Endothelial cell of umbilical vein (primary cell): ENCODE measurements at regions of chr1 and their contacts with region 1.

Region 1: DNA sequence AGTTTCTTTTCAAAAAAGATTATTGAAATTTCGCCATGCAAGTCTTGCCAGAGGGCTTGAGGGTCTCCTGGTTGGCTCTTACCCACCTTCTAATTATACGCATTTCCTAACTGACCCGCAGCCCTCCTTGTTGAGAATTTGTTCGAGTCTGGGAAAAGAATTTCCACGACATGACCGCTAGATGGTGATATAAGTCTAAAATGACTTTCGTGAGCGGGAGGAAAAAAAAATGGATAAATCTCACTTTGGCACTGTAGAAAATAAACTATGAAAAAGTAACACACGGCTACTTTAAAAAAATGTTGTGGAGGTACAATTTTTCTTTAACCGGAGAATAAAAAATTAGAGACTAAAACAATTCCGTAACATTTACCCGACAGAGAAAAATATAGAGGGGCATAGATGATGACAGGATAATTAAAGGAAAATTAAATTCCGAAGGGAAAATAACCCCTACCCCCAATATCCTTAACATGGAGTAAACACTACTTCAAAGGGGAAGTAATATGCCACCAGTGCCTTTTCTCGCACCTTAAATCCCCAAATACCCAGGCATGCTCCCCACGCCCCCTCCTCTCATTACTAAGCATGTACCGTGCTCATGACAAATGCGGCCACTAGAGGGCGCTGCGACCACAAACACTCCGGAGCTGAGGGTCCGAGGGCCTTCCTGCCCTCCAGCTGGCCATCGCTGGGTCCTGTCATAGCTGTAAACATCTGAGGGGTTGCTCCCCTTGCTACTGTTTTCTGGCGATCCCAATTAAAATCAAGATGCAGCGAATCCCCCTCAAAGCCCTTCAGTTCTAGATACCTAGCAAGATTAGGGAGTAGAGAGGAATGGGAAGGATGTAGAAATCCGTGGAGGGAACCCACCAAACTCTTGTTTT is 266.9 kb downstream of the ASTN1 start:
- DNase-seq: peak; percentile 49
- H3K4me3 ChIP-seq: peak overlapping the region in 1 of 3 experiments; percentile 37
- H3K27ac ChIP-seq: no peak overlapping the region
- H3K4me1 ChIP-seq: peaks cover 4% of the 10 kb centered on the region
- H3K27me3 ChIP-seq: no peaks in the 10 kb centered on the region
- CTCF ChIP-seq: peak; percentile 79 to 89
- POLR2A ChIP-seq: no peak

Region 2: DNA sequence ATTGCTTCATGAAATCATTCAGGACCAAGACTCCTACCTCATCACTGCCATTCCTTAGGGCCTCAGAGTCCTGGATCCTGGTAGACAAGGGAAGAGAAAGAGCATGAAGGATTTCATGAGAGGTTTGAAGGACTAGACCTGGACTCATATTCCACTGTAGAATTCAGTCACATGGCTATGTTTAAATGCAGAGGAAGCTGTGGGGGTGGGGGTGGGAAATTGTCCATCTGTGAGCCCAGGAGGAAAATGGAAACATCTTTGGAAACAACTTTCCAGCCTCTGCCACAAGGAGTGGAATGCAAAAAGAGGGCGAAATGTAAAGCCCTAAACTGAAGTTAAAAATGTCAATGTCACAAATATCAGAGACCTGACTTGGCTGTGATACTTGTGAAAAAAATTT is 346.2 kb after region 1 on chr1:
- CTCF ChIA-PET with region 1: no interaction called
- POLR2A ChIA-PET with region 1: no interaction called
- dilution Hi-C with region 1: no loop called
- intact Hi-C with region 1: no loop called
- DNase-seq: no peak
- H3K4me3 ChIP-seq: no peak overlapping the region
- H3K27ac ChIP-seq: no peak overlapping the region
- H3K4me1 ChIP-seq: no peaks in the 10 kb centered on the region
- H3K27me3 ChIP-seq: no peaks in the 10 kb centered on the region
- CTCF ChIP-seq: no peak
- POLR2A ChIP-seq: no peak

Region 3: DNA sequence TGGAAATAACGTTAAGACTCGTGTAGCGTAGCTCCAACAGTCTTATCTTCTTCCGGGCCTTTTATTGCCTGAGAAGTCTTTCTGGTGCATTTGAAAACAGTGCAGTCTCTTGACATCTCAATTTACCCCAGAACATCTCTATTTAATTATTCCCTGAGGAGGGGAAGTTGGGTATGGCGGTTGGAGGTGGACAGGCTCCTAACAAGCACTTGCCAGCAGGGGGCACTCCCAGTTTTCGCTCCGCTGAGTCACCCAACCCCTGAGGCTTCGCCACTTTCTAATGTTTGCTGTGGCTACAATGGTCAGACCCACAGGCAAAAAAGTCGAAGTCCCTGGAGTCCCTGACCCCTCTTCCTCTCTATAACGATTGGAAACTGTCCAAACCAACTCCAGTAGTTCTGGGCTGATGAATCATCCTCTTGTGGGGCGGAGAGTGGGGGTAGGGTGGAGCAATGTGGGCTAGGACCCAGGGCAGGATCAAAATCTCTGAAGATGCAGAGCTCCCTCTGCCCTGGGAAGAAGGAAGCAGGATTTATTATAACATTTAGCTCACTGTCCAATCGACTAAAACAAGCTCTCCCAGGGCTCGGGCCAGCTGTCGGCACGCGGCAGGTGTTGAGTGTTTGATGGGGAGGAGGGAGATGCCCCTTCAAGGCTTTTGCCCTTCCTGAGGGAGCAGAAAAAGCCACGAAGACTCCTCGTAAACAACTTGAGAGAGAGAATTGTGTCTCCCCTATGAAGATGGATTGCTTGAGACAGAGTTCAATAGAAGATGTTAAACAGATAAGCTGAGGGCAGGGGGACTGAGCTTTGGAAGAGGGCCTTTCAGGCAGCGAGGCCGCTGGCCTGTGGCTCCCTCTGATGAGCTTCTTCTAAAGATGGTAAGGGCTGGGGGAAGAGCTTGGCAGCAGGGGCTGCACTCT is 358.8 kb after region 1 on chr1:
- CTCF ChIA-PET with region 1: no interaction called
- POLR2A ChIA-PET with region 1: no interaction called
- dilution Hi-C with region 1: no loop called
- intact Hi-C with region 1: loop called (anchors 5 kb)
- DNase-seq: peak; percentile 53
- H3K4me3 ChIP-seq: no peak overlapping the region
- H3K27ac ChIP-seq: no peak overlapping the region
- H3K4me1 ChIP-seq: peaks cover 8% of the 10 kb centered on the region
- H3K27me3 ChIP-seq: no peaks in the 10 kb centered on the region
- CTCF ChIP-seq: peak; percentile 42 to 45
- POLR2A ChIP-seq: no peak

Region 4: DNA sequence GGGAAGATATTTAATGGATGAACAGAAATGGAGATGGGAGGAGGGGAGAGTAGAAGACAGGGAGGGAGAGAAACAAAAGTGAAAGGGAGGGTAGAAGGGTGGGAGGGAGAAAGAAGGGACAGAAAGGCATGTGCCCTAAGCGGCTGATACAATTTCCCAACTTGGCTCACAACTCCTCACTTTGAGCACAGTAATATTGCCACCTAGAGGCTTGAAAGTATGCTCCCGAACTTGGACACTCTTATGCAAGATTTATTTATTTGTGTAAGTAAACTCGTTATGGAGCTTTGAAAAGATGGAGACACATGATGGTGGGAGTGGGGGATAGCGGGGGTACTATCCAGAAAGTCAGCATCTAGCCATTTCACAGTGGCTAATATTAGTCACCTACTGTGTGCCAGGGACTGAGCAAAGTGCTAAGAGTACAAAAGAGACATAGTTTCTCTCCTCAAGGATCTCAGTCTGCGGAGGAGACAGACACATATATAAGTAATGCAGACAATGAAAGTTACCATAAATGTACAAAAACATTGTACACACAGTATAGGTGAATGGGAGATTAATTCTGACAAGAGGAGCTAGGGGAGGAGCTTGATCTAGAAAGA is 882.6 kb after region 1 on chr1:
- CTCF ChIA-PET with region 1: interaction called, 19 read pairs
- POLR2A ChIA-PET with region 1: no interaction called
- dilution Hi-C with region 1: no loop called
- intact Hi-C with region 1: no loop called
- DNase-seq: peak; percentile 45
- H3K4me3 ChIP-seq: no peak overlapping the region
- H3K27ac ChIP-seq: no peak overlapping the region
- H3K4me1 ChIP-seq: peaks cover 4% of the 10 kb centered on the region
- H3K27me3 ChIP-seq: no peaks in the 10 kb centered on the region
- CTCF ChIP-seq: peak in 1 of 2 donors; percentile 19
- POLR2A ChIP-seq: no peak

Region 5: DNA sequence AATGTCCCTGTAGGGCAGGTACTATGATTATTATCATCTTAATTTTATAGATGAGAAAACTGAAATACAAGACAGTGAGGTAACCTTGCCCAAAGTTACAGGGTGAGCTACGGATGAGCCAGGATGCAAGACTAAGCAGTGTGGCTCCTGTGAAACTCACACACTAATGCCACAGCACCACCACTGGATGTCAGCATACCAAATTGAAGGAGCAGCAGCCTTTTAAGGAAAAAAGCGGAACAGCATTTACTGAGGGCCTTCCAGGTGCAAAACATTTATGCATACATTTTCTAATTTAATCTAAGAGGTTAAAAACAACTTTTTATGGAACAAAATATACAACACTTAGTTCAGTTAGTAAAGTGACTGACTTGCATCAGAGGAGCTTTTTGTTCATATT is 1030.6 kb after region 1 on chr1:
- CTCF ChIA-PET with region 1: interaction called, 7 read pairs
- POLR2A ChIA-PET with region 1: no interaction called
- dilution Hi-C with region 1: no loop called
- intact Hi-C with region 1: loop called (anchors 5 kb)
- DNase-seq: peak; percentile 22
- H3K4me3 ChIP-seq: no peak overlapping the region
- H3K27ac ChIP-seq: peak overlapping the region; percentile 100
- H3K4me1 ChIP-seq: peaks cover 38% of the 10 kb centered on the region
- H3K27me3 ChIP-seq: no peaks in the 10 kb centered on the region
- CTCF ChIP-seq: no peak
- POLR2A ChIP-seq: no peak